ENCODE measurements at regions of chr5 and their contacts with region 1.

Region 1: GRCh38 chr5:147369742-147370374 is 135.0 kb downstream of the STK32A start:
- DNase-seq: peak; percentile 36
- H3K4me3 Mint-ChIP-seq: no peak overlapping the region
- H3K27ac Mint-ChIP-seq: no peak overlapping the region
- H3K4me1 Mint-ChIP-seq: no peaks in the 10 kb centered on the region
- H3K27me3 Mint-ChIP-seq: no peaks in the 10 kb centered on the region
- CTCF ChIP-seq: peak; percentile 88

Region 2: GRCh38 chr5:146541958-146542849 is 827.7 kb before region 1 on chr5:
- CTCF ChIA-PET with region 1: interaction called, 20 read pairs
- POLR2A ChIA-PET with region 1: no interaction called
- intact Hi-C with region 1: loop called (anchors 5 kb)
- DNase-seq: peak; percentile 78
- H3K4me3 Mint-ChIP-seq: no peak overlapping the region
- H3K27ac Mint-ChIP-seq: no peak overlapping the region
- H3K4me1 Mint-ChIP-seq: peaks cover 11% of the 10 kb centered on the region
- H3K27me3 Mint-ChIP-seq: peaks cover 20% of the 10 kb centered on the region
- CTCF ChIP-seq: peak; percentile 99

Region 3: GRCh38 chr5:147216552-147217154 is 153.2 kb before region 1 on chr5:
- CTCF ChIA-PET with region 1: interaction called, 225 read pairs
- POLR2A ChIA-PET with region 1: no interaction called
- intact Hi-C with region 1: no loop called
- DNase-seq: peak; percentile 46
- H3K4me3 Mint-ChIP-seq: no peak overlapping the region
- H3K27ac Mint-ChIP-seq: no peak overlapping the region
- H3K4me1 Mint-ChIP-seq: no peaks in the 10 kb centered on the region
- H3K27me3 Mint-ChIP-seq: peaks cover 33% of the 10 kb centered on the region
- CTCF ChIP-seq: no peak

Region 4: GRCh38 chr5:147382776-147383175 is 12.9 kb after region 1 on chr5:
- CTCF ChIA-PET with region 1: interaction called, 39 read pairs
- POLR2A ChIA-PET with region 1: interaction called, 3 read pairs
- intact Hi-C with region 1: no loop called
- DNase-seq: no peak
- H3K4me3 Mint-ChIP-seq: no peak overlapping the region
- H3K27ac Mint-ChIP-seq: no peak overlapping the region
- H3K4me1 Mint-ChIP-seq: no peaks in the 10 kb centered on the region
- H3K27me3 Mint-ChIP-seq: no peaks in the 10 kb centered on the region
- CTCF ChIP-seq: no peak

Region 5: DNA sequence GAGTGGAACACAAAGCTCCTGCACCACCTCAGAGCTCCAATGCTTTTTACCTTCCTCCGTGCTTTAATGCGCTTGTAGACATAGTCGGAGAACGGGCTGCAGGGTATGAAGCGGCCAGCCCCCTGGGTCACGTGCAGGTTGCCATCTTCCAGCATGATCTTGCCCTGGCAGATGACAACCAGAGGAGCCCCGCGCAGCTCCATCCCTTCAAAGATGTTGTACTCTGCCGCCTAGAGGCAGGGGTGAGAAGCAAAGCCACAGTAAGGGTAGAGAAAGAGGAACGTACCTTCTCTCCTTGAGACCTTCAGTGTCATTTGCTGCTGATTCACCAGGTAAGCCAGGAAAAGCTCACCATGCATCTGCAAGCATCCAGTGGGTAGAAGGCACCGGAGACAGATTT is 27.8 kb after region 1 on chr5:
- CTCF ChIA-PET with region 1: interaction called, 20 read pairs
- POLR2A ChIA-PET with region 1: no interaction called
- intact Hi-C with region 1: no loop called
- DNase-seq: no peak
- H3K4me3 Mint-ChIP-seq: no peak overlapping the region
- H3K27ac Mint-ChIP-seq: no peak overlapping the region
- H3K4me1 Mint-ChIP-seq: no peaks in the 10 kb centered on the region
- H3K27me3 Mint-ChIP-seq: no peaks in the 10 kb centered on the region
- CTCF ChIP-seq: no peak

Region 6: GRCh38 chr5:147751156-147751825 is 381.4 kb after region 1 on chr5:
- CTCF ChIA-PET with region 1: no interaction called
- POLR2A ChIA-PET with region 1: no interaction called
- intact Hi-C with region 1: no loop called
- DNase-seq: no peak
- H3K4me3 Mint-ChIP-seq: no peak overlapping the region
- H3K27ac Mint-ChIP-seq: no peak overlapping the region
- H3K4me1 Mint-ChIP-seq: peaks cover 5% of the 10 kb centered on the region
- H3K27me3 Mint-ChIP-seq: no peaks in the 10 kb centered on the region
- CTCF ChIP-seq: no peak